ENCODE measurements at regions of chr18 and their contacts with region 1.

Region 1: GRCh38 chr18:79068937-79069791 is at the start of gene ATP9B:
- DNase-seq: peak; percentile 97 to 99 (median 97)
- ATAC-seq: peak; percentile 96 to 99 (median 98)
- H3K4me3 ChIP-seq: peak within 1 kb of the TSS; percentile 66 to 100 (median 87)
- H3K27ac ChIP-seq: peak within 1 kb of the TSS; percentile 57 to 98 (median 91)
- H3K4me1 ChIP-seq: peaks cover 0 to 26% (median 17%) of the 10 kb centered on the region in 12 donors
- H3K27me3 ChIP-seq: no peaks in the 10 kb centered on the region
- CTCF ChIP-seq: peak in 6 of 12 donors; percentile 5 to 44 (median 18)
- POLR2A ChIP-seq: peak in 1 of 2 donors; percentile 47
- total RNA-seq, gene ATP9B: 12.3 to 23.9 (median 12.9) TPM

Region 2: DNA sequence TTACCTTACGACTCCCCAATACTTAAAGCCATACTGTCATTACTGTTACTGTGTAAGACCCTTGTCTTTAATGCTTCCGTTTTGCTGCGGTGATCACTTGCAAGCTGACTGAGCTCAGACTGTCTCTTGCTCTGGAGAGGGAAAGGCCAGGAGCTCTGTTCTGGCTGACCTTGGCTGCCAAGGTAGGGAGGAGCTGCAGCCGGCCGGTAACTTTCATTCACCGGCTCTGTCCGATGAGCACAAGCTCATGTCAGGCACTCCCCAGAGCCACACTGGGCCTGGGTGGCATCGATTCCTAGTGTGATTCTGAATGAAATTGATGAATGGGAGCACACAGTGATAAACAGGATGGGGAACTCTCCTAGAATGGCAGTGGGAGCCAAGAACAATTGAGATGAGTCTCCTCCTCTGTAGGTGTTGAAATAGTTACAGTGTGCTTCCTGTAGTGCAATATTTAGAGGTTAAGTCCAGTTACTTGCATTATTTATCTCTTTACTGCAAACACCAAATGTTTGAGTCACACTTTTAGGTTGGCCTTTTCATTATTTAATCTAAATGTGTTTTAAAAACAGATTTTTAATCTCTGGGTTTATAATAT is 100.9 kb after region 1 on chr18:
- intact Hi-C with region 1: loop called in 2 of 10 experiments (anchors 5 to 10 kb)
- DNase-seq: peak in 1 of 5 donors; percentile 30
- ATAC-seq: peak in 3 of 4 donors; percentile 28 to 57 (median 57)
- H3K4me3 ChIP-seq: no peak overlapping the region
- H3K27ac ChIP-seq: no peak overlapping the region
- H3K4me1 ChIP-seq: peaks cover 0 to 14% (median 6%) of the 10 kb centered on the region in 12 donors
- H3K27me3 ChIP-seq: no peaks in the 10 kb centered on the region
- CTCF ChIP-seq: no peak
- POLR2A ChIP-seq: no peak

Region 3: DNA sequence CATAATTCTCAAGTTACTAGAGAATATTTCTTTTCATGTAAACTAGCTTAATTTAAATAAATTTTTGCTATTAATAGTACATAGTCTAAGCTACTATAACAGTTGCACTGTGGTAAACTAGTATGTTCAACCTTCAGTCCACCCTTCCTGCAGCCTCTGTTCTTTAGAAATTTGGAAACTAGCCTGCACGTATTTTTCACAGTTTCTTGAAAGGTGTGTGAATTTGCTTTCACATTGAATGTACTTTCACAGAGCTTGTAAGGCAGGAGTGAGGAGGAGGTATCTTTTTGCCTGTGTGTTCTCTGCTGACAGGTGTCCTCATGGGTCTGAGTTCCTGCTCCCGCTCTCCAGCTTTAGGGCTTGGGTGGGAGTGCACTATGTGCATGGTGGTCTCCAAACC is 117.5 kb after region 1 on chr18:
- intact Hi-C with region 1: loop called in 1 of 10 experiments (anchors 10 kb)
- DNase-seq: no peak
- ATAC-seq: no peak
- H3K4me3 ChIP-seq: no peak overlapping the region
- H3K27ac ChIP-seq: no peak overlapping the region
- H3K4me1 ChIP-seq: peaks cover 0 to 8% (median 0%) of the 10 kb centered on the region in 12 donors
- H3K27me3 ChIP-seq: no peaks in the 10 kb centered on the region
- CTCF ChIP-seq: no peak
- POLR2A ChIP-seq: no peak

Region 4: GRCh38 chr18:79200546-79201268 is 131.5 kb after region 1 on chr18:
- intact Hi-C with region 1: loop called in 1 of 10 experiments (anchors 10 kb)
- DNase-seq: peak in 4 of 5 donors; percentile 39 to 74 (median 56)
- ATAC-seq: peak in 3 of 4 donors; percentile 79 to 95 (median 81)
- H3K4me3 ChIP-seq: no peak overlapping the region
- H3K27ac ChIP-seq: no peak overlapping the region
- H3K4me1 ChIP-seq: peaks cover 0 to 3% (median 0%) of the 10 kb centered on the region in 12 donors
- H3K27me3 ChIP-seq: no peaks in the 10 kb centered on the region
- CTCF ChIP-seq: no peak
- POLR2A ChIP-seq: no peak

Region 5: DNA sequence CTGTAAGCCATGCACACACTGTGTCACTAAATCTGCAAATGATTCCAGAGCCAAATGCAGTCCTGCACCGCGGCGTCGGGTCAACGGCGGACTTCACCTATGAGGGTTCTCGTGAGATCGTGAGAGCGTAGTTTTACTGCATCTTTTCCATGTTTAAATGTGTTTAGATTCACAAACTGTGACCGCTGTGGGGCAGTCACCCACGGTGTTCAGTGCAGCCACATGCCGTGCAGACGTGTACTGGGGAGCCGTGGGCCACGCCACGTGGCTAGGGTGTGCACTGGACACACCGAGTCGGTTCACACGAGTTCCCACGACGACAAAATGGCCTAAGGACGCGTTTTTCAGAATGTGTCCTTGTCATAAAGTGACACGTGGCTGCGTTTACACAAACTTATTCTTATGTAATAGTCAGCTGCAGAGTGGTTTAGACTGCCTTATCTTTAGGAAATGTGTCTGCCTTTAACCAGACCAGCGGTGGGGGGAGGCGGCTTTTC is 360.7 kb after region 1 on chr18:
- intact Hi-C with region 1: no loop called
- DNase-seq: no peak
- ATAC-seq: no peak
- H3K4me3 ChIP-seq: no peak overlapping the region
- H3K27ac ChIP-seq: no peak overlapping the region
- H3K4me1 ChIP-seq: peaks cover 0 to 5% (median 0%) of the 10 kb centered on the region in 12 donors
- H3K27me3 ChIP-seq: no peaks in the 10 kb centered on the region
- CTCF ChIP-seq: no peak
- POLR2A ChIP-seq: no peak

Region 6: DNA sequence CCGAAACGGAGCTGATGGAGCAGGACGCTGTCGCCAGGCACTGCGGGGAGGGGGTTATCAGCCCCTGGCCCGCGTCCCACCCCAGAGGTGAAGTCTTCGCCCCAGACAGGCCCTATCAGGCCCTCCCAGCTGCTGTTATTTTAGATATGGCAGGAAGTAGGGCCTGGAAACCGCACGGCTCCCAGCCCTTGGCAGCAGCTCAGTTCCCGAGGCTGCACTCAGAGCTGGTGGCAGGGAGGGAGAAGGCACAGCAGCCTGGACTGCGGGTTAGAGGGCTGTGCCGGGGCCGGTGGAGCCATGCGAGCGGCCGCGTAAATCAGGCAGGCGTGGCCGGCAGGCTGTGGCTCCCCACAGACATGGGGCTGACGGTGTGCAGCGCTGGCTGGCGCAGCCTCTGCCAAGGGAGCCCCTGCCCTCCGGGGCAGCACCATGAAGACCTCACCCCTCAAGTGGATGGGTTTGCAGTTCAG is 437.9 kb after region 1 on chr18:
- intact Hi-C with region 1: loop called in 1 of 10 experiments (anchors 5 kb)
- DNase-seq: peak; percentile 81 to 90 (median 88)
- ATAC-seq: peak; percentile 91 to 93 (median 92)
- H3K4me3 ChIP-seq: peak overlapping the region in 11 of 12 donors; percentile 25 to 55 (median 44)
- H3K27ac ChIP-seq: peak overlapping the region; percentile 85 to 97 (median 92)
- H3K4me1 ChIP-seq: peaks cover 3 to 38% (median 29%) of the 10 kb centered on the region in 12 donors
- H3K27me3 ChIP-seq: no peaks in the 10 kb centered on the region
- CTCF ChIP-seq: no peak
- POLR2A ChIP-seq: no peak

Region 7: DNA sequence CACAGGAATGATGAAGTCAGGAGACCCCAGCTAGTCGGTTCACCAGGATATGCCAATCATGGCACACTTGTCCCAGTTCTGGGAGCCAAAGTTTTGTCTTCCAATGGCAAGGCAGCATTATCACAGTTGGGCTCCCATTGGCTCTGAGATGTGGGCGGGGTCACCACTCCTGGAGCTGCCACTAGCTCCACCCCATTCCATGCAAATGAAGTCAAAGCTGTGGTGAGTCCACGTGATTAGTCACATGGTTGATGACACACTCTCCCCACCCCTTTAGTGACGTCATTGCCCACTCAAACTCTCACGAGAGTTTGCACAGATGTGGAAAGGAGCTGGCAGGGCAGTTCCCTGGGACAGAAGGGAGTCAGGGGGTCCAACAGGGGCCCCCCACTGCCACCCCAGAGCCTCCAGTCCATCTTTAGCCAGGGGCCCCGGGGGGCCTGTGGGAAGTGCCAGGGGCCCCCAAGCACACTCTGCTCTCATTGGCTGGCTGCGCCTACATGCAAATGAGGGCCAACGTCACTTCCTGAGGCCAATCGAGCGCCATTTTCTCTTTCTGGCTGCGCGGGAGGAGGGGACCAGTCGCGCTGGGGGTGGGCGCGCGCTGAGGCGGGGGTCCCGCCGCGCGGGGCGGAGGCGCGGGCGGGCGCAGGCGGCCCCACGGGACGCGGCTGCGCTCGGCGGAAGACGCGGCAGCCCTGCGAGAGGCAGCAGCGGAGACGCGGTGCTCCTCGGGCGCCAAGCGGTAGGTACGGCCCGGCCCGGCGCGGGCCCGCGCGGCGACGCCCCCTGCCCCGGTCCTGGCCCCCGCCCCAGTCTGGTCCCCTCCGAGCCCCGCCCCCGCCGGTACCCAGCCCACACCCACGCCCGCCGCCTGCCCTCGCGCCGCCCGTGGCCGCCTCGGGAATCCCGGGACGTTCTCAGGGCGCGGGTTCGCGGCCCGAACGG is 1039.8 kb after region 1 on chr18 and contains the start of gene ADNP2:
- intact Hi-C with region 1: loop called in 1 of 10 experiments (anchors 5 kb)
- DNase-seq: peak; percentile 77 to 90 (median 87)
- ATAC-seq: peak; percentile 90 to 95 (median 94)
- H3K4me3 ChIP-seq: peak within 1 kb of the TSS; percentile 52 to 98 (median 72)
- H3K27ac ChIP-seq: peak within 1 kb of the TSS; percentile 77 to 95 (median 86)
- H3K4me1 ChIP-seq: peaks cover 0 to 35% (median 26%) of the 10 kb centered on the region in 12 donors
- H3K27me3 ChIP-seq: no peaks in the 10 kb centered on the region
- CTCF ChIP-seq: no peak
- POLR2A ChIP-seq: no peak
- total RNA-seq, gene ADNP2: 6.7 to 13.1 (median 8.8) TPM